GM10248 (cell line): ENCODE measurements at regions of chr3 and their contacts with region 1.

Region 1: DNA sequence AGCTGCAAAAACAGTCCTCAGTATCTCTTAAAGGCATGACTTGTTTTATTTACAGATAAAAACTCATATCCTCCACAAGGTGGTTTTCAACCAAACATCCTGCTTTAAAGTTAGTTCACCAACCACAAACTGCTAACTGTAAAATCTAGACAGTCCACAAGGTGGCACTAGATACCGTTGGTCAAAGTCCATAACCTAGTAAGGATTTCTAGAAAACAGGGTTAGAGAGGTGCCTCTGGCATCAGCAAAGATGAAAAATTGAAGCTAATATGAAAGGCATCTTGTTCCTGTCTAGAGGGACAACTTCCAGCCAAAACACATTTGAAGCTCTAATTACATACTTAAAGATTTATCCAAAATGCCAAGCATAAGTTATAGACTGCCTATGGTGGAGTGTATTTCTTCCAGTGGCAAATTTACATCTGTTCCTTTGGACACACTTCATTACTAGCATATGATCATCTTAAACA is 56.0 kb downstream of the ZMAT3 start:
- DNase-seq: peak; percentile 42
- CTCF ChIP-seq: peak; percentile 80

Region 2: DNA sequence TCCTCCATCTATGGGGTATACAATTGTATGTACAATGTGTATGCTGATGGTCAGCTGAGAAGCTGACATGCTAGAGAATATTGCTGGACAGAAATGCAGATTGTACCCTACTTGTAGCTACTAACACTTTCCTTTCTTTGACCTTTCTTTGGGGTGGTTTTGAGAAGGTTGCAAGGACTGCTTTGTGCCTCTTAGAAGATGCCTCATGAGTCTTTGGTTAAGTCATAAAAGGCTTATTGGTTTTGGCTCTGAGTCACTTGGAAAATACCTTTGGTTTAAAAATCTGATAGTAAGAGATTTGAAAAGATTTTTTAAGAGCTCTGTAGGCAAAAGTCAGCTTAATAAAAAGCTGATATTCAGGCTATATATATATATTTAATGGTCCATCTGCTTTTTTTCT is 15.4 kb before region 1 on chr3:
- CTCF ChIA-PET with region 1: interaction called, 15 read pairs
- POLR2A ChIA-PET with region 1: no interaction called
- DNase-seq: peak; percentile 26
- CTCF ChIP-seq: no peak

Region 3: GRCh38 chr3:179046497-179047353 is 31.1 kb after region 1 on chr3:
- CTCF ChIA-PET with region 1: interaction called, 18 read pairs
- POLR2A ChIA-PET with region 1: interaction called, 3 read pairs
- DNase-seq: peak; percentile 47
- CTCF ChIP-seq: no peak

Region 4: DNA sequence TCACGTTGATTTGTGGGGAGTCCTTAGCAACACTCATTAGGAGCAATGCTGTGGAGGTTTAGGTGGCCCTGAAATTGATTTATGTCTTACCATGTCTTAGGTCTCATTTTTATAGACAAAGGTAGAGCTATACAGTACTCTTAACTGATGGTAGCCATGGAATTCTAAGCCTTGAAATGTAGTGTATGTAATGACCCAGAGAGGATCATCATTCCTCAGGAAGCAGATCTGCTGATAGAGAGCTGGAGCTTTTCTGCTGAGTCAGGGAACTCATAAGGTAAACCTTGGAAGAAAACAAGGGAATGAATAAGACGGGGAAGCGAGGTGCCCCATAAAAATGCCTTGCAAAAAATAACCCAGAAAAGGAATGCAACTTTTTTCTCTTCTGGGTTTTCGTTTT is 273.3 kb after region 1 on chr3:
- CTCF ChIA-PET with region 1: no interaction called
- POLR2A ChIA-PET with region 1: no interaction called
- DNase-seq: no peak
- CTCF ChIP-seq: no peak

Region 5: GRCh38 chr3:179322286-179323196 is 307.0 kb after region 1 on chr3 and contains the start of gene ZNF639:
- CTCF ChIA-PET with region 1: interaction called, 24 read pairs
- POLR2A ChIA-PET with region 1: no interaction called
- DNase-seq: peak; percentile 93
- CTCF ChIP-seq: peak; percentile 72